Activated B cell treated with CpG ODN at 0.5 μM for 24 hours (primary cell): ENCODE measurements at regions of chrX and their contacts with region 1.

Region 1: GRCh38 chrX:19739683-19740082 is 147.7 kb downstream of the SH3KBP1 start:
- DNase-seq: no peak
- ATAC-seq: peak; percentile 57
- H3K4me3 Mint-ChIP-seq: no peak overlapping the region
- H3K27ac Mint-ChIP-seq: no peak overlapping the region
- H3K4me1 Mint-ChIP-seq: peaks cover 46% of the 10 kb centered on the region
- H3K27me3 Mint-ChIP-seq: no peaks in the 10 kb centered on the region
- CTCF ChIP-seq: no peak

Region 2: GRCh38 chrX:19602866-19603622 is 136.6 kb before region 1 on chrX:
- CTCF ChIA-PET with region 1: no interaction called
- POLR2A ChIA-PET with region 1: no interaction called
- intact Hi-C with region 1: no loop called
- DNase-seq: no peak
- ATAC-seq: no peak
- H3K4me3 Mint-ChIP-seq: no peak overlapping the region
- H3K27ac Mint-ChIP-seq: no peak overlapping the region
- H3K4me1 Mint-ChIP-seq: no peaks in the 10 kb centered on the region
- H3K27me3 Mint-ChIP-seq: no peaks in the 10 kb centered on the region
- CTCF ChIP-seq: no peak

Region 3: GRCh38 chrX:19682712-19683331 is 56.9 kb before region 1 on chrX:
- CTCF ChIA-PET with region 1: no interaction called
- POLR2A ChIA-PET with region 1: no interaction called
- intact Hi-C with region 1: loop called (anchors 10 kb)
- DNase-seq: peak; percentile 18
- ATAC-seq: peak; percentile 76
- H3K4me3 Mint-ChIP-seq: peak overlapping the region; percentile 11
- H3K27ac Mint-ChIP-seq: peak overlapping the region; percentile 79
- H3K4me1 Mint-ChIP-seq: peaks cover 70% of the 10 kb centered on the region
- H3K27me3 Mint-ChIP-seq: no peaks in the 10 kb centered on the region
- CTCF ChIP-seq: no peak

Region 4: DNA sequence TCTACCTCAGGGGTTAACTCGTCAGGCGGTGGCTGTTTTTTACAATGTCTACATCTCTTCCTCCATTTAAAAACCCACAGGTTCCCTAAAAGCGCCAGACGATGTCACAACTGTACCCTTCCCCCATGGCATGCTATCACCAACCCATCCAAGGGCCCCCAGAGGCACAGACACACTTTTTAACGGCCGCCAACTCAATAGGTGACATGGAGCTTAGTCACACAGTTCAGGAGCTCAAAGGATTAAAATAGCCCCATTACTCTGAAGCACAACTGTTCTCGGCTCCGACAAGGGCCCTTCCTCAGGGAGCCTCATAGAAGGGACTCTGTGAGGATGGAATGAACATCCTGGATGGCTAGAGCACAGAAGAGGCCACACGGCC is 135.4 kb after region 1 on chrX:
- CTCF ChIA-PET with region 1: no interaction called
- POLR2A ChIA-PET with region 1: interaction called, 4 read pairs
- intact Hi-C with region 1: loop called (anchors 1 kb)
- DNase-seq: no peak
- ATAC-seq: peak; percentile 79
- H3K4me3 Mint-ChIP-seq: peak overlapping the region; percentile 69
- H3K27ac Mint-ChIP-seq: peak overlapping the region; percentile 84
- H3K4me1 Mint-ChIP-seq: peaks cover 86% of the 10 kb centered on the region
- H3K27me3 Mint-ChIP-seq: no peaks in the 10 kb centered on the region
- CTCF ChIP-seq: no peak

Region 5: DNA sequence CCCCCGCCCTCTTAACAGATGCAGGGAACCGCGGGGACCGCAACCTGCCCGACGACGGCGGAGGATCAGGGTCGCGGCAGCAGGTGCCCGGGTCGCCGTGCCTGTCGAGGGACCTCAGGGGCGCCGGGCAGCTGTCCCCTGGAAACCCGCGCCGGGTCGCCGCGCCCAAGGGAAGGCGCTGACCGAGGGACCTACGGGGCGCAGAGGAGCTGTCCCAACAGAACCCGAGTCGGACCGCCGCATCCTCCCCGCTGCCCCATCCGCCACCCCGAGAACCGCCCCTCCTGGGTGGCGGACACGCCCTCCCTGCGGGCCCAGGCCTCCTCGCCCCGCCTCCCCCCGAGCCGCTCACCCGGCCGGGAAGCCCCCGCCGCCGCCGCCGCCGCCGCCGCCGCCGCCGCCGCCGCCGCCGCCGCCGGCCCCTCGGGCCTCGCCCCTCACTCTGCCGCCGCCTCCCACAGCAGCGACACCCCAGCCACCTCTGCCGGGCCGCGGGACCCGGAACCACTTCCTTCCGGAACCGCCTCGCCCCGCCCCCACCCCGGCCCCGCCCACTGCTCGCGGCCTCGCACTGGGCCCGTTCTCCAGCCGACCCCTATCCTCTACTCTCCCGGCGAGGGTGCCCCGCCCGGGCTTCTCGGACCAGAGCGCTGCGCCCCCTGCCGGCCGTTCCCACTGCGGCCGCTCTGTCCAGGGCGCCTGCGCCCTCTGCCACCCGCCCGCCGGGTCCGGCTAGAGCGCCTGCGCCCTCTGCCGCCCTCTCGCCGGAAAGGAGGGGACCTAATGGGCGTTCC is 251.1 kb after region 1 on chrX and contains the start of gene BCLAF3:
- CTCF ChIA-PET with region 1: no interaction called
- POLR2A ChIA-PET with region 1: no interaction called
- intact Hi-C with region 1: loop called (anchors 1 kb)
- DNase-seq: peak; percentile 83
- ATAC-seq: peak; percentile 92
- H3K4me3 Mint-ChIP-seq: peak within 1 kb of the TSS; percentile 86
- H3K27ac Mint-ChIP-seq: peak within 1 kb of the TSS; percentile 85
- H3K4me1 Mint-ChIP-seq: peaks cover 16% of the 10 kb centered on the region
- H3K27me3 Mint-ChIP-seq: no peaks in the 10 kb centered on the region
- CTCF ChIP-seq: no peak
- total RNA-seq, gene BCLAF3: 11.6 and 15.3 TPM in 2 replicates